Activated CD4-positive, alpha-beta memory T cell treated with anti-CD3 and anti-CD28 coated beads for 36 hours (primary cell): ENCODE measurements at regions of chr2 and their contacts with region 1.

Region 1: GRCh38 chr2:118013724-118014491 is at the start of gene CCDC93:
- DNase-seq: peak; percentile 90
- H3K4me3 Mint-ChIP-seq: peak within 1 kb of the TSS; percentile 92
- H3K27ac Mint-ChIP-seq: peak within 1 kb of the TSS; percentile 80
- H3K4me1 Mint-ChIP-seq: peaks cover 36% of the 10 kb centered on the region
- H3K27me3 Mint-ChIP-seq: peaks cover 3% of the 10 kb centered on the region
- total RNA-seq, gene CCDC93: 24.9 to 27.3 TPM

Region 2: DNA sequence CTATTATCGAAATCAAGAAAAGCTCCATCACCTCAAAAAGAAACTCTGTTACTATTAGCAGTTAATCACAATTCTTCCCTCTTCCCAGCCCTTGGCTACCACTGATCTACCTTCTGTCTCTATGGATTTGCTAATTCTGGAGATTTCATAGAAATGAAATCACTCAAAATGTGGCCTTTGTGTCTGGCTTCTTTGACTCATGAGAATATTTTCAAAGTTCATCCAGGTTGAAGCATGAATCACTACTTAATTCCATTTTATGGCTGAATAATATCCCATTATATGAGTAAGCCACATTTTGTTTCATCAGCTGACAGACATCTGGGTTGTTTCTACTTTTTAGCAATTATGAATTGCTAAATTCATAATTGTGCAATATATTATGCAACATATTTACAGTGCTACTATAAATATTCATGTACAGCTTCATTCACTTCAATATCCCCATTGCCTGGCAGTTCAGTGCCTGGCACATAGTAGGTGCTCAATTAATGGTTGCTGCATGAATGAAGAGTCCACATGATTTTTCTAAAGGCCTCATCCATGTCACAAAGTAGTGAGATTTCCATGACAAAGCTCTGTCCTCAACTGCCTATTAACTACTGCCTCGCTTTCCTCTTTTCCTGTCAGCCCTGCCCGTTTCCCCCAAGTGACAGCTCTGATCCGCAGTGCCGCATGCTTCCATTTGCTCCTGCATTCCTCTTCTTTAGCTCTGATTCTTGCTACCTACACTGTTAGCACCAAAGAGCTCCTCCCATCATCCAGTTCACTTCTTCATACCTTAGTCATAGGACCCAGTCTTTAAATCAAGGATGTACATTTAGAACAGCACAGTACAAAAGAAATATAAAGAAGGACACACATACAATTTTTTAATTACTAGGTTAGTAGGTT is 32.9 kb before region 1 on chr2:
- CTCF ChIA-PET with region 1: no interaction called
- POLR2A ChIA-PET with region 1: no interaction called
- intact Hi-C with region 1: no loop called
- DNase-seq: no peak
- H3K4me3 Mint-ChIP-seq: no peak overlapping the region
- H3K27ac Mint-ChIP-seq: peak overlapping the region; percentile 47
- H3K4me1 Mint-ChIP-seq: peaks cover 3% of the 10 kb centered on the region
- H3K27me3 Mint-ChIP-seq: no peaks in the 10 kb centered on the region

Region 3: DNA sequence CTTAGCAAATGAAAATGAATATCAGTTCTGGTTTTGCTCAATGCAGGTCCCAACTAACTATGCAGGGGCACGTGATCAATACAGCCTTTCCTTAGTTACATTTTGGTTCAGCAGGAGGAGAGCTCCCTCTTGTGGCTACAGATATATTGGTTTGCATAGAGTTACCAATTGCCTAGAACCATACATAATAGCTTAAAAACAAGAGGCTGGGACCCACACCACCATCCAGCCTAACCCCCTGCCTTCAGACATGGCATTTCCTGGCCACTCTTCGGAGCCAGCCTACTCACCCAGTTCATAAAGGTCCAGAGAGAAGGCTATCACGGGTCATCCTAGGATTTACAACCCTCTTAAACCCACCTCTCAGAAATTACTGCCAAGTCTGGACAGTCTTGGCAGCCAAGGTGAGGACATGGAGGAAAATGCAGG is 10.5 kb before region 1 on chr2:
- CTCF ChIA-PET with region 1: interaction called, 63 read pairs
- POLR2A ChIA-PET with region 1: interaction called, 8 read pairs
- intact Hi-C with region 1: loop called (anchors 1 kb)
- DNase-seq: peak; percentile 43
- H3K4me3 Mint-ChIP-seq: no peak overlapping the region
- H3K27ac Mint-ChIP-seq: peak overlapping the region; percentile 43
- H3K4me1 Mint-ChIP-seq: peaks cover 21% of the 10 kb centered on the region
- H3K27me3 Mint-ChIP-seq: no peaks in the 10 kb centered on the region

Region 4: DNA sequence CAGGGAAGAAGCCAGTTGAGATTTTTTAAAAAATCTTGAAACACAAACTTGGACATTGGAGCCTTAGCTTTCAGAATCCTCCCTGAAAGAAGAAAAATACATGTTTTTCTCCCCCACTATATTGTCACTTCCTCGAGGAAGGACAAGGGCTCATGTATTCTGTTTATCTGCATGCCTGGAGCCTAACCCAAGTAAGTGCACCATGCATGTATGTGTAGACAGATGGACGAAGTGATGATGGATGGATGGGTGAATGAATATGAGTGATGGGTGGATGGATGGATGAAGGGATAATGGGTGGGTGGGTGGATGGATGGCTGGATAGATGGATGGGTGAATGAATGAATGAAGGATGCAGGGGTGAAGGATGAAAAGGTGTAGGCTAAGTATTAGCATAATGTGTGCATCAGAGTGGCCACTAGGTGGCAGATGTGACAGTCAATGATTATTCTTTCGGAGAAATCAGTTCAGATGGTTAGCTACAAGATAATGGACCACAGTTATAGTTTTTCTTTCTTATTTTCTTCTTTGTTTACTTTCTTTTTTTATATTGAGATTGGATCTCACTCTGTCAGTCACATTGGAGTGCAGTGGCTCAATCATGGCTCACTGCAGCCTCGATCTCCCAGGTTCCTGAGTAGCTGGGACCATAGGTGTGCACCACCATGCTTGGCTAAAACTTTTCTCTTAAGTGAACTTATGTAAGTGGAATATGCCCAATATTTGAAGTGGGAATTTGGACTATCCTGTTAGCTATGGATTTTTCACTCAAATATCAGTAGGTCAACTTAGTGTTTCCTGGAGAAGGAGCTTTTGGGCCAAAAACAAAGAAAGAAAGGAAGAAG is 18.5 kb after region 1 on chr2:
- CTCF ChIA-PET with region 1: interaction called, 10 read pairs
- POLR2A ChIA-PET with region 1: no interaction called
- intact Hi-C with region 1: no loop called
- DNase-seq: peak; percentile 52
- H3K4me3 Mint-ChIP-seq: no peak overlapping the region
- H3K27ac Mint-ChIP-seq: no peak overlapping the region
- H3K4me1 Mint-ChIP-seq: no peaks in the 10 kb centered on the region
- H3K27me3 Mint-ChIP-seq: peaks cover 33% of the 10 kb centered on the region

Region 5: GRCh38 chr2:118088051-118089024 is 74.4 kb after region 1 on chr2 and contains the start of gene INSIG2:
- CTCF ChIA-PET with region 1: no interaction called
- POLR2A ChIA-PET with region 1: interaction called, 5 read pairs
- intact Hi-C with region 1: loop called (anchors 1 kb)
- DNase-seq: peak; percentile 96
- H3K4me3 Mint-ChIP-seq: peak within 1 kb of the TSS; percentile 89
- H3K27ac Mint-ChIP-seq: peak within 1 kb of the TSS; percentile 85
- H3K4me1 Mint-ChIP-seq: peaks cover 21% of the 10 kb centered on the region
- H3K27me3 Mint-ChIP-seq: peaks cover 2% of the 10 kb centered on the region
- total RNA-seq, gene INSIG2: 35.0 to 40.2 TPM

Region 6: DNA sequence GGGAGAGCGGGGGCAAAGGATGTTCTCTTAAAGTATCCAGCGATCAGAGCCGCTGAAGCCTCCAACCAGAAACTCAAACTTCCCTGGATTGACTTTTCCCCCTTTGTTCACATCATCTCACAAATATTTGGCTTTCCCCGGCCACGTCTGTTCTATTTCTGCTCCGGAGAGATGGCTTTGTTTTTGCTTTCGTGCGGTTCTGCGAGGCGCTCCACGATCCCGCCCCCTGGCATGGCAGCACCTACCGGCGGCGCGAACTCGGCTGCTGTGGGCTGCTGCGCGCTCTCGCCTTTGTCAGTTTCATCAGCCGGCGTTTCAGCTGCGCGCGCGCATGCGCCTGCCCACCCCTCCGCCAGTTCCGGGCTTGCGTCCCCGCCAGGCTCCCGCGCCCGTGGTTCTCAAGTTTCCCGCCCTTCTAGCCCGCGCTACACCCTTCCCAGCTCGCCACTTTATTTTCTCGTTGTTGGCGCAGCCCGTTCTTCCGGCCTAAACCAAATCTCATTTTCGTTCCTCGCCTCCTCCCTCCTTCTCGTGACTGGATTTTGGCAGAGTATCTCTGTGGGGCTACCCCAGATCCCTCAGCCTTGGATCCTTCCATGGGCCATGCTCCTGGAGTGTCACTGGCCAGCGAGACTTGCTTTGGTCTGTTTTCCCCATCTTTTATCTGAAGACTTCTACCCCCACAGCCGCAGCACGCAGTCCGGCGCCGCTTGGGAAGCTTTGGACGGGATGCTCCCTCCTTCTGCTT is 172.4 kb after region 1 on chr2:
- CTCF ChIA-PET with region 1: no interaction called
- POLR2A ChIA-PET with region 1: interaction called, 4 read pairs
- intact Hi-C with region 1: loop called (anchors 2 kb)
- DNase-seq: peak; percentile 92
- H3K4me3 Mint-ChIP-seq: peak overlapping the region; percentile 93
- H3K27ac Mint-ChIP-seq: peak overlapping the region; percentile 94
- H3K4me1 Mint-ChIP-seq: peaks cover 11% of the 10 kb centered on the region
- H3K27me3 Mint-ChIP-seq: no peaks in the 10 kb centered on the region

Region 7: DNA sequence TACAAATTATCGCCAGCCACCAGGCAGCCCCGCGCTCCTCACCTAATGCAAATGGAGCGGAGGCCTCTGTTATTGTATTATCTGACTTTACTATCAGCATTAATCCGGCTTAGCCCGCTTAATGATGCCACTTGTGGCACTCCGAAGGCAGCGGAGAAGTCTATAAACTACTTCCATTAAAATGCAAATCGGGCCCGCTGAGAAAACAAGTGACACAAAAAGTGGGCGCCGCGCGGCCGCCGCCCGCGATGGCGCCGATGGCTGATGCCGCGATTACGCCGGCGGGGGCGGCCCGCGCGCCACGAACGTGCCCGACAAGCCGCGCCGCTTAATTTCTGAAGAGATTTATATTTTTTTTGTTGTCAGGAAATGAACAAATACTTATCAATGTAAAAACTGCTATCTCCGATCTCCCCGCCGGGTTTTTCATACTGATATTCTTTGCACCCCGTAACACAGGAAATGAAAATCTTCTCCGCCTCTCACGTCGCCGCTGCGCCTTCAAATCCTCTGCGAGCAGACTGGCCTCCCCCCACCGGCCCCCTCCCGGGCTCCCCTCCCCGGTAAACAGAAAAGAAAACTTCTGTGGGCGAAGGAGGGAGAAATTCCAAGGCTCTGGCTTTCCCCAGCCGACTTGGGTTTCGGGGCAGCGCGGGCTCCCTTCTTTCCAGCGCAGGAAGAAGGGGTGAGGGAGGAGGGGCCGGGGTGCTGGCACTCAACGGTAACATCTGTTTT is 296.2 kb after region 1 on chr2:
- CTCF ChIA-PET with region 1: no interaction called
- POLR2A ChIA-PET with region 1: no interaction called
- intact Hi-C with region 1: loop called (anchors 10 kb)
- DNase-seq: peak; percentile 78
- H3K4me3 Mint-ChIP-seq: peak overlapping the region; percentile 79
- H3K27ac Mint-ChIP-seq: peak overlapping the region; percentile 88
- H3K4me1 Mint-ChIP-seq: peaks cover 8% of the 10 kb centered on the region
- H3K27me3 Mint-ChIP-seq: peaks cover 2% of the 10 kb centered on the region

Region 8: DNA sequence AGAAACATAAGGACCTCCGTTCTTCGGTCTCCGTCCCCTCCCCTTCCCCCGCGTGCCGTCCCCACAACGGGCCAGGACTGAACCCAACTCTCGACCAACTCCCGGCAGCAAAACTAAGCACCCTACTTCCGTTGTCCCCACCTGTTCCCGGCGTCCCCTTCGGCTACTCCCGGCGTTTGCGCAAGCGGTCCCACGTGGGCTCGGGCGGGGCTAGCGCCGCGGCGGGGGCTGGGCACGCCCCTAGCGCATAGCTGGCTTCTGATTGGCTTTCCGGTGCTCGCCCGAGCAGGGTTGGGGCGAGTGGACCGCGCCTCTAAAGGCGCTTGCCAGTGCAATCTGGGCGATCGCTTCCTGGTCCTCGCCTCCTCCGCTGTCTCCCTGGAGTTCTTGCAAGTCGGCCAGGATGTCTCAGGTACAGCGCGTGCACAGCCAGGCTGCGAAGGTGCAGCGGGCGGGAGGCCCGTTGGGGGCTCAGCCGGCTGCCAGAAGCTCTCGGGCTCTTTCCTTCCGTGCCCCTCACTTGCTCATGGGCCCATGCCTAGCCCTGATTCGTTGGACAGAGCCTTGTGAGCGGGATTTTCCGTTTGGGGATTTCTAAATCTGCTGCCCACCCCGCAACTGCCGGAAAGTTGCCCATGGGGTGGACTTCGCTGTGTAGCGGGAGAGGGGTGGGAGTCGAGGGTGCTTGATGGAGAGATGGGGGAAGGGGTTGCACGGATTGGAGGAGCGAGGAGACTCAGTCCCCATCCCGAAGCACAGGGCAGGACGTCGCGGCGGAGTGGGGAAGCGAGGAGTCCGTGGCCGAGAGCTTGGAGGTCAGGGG is 1353.0 kb after region 1 on chr2 and contains the starts of genes C2orf76 and DBI:
- CTCF ChIA-PET with region 1: no interaction called
- POLR2A ChIA-PET with region 1: no interaction called
- intact Hi-C with region 1: loop called (anchors 5 kb)
- DNase-seq: peak; percentile 96
- H3K4me3 Mint-ChIP-seq: peak within 1 kb of the TSS; percentile 100
- H3K27ac Mint-ChIP-seq: peak within 1 kb of the TSS; percentile 96
- H3K4me1 Mint-ChIP-seq: peaks cover 33% of the 10 kb centered on the region
- H3K27me3 Mint-ChIP-seq: no peaks in the 10 kb centered on the region
- total RNA-seq, gene C2orf76: 10.5 to 11.5 TPM
- total RNA-seq, gene DBI: 149 to 150 TPM